PC-9 (cell line): ENCODE measurements at regions of chr1 and their contacts with region 1.

Region 1: DNA sequence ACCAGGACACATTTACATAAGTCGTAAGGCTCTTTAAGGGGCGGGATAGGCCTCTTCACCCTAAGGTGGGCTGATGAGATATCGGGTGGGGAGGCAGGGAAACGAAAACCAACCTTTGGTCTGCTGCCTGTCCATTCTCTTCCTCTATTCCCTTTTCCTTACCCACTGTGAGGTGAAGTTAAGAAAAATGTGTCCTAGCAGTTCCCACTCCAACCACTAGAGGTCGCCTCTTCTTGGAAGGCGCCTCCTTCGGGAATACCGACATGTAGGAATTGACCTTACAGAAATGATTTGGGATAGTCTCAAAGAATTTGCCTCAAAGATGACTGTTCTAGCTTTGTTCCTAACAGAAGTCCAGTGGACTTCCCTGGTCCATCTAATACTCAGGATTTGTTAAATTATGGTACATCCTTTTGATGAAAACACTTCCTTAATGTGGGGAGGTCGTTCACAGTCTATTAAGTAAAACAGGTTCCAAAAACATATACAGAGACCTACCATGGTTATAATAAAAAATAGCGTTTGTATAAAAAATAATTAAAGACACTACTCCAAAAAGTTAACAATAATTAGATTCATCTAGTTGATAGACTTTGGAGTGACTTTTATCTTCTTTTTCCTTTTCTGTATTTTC is 14.1 kb downstream of the AZIN2 start:
- DNase-seq: peak; percentile 47 to 58
- H3K4me3 ChIP-seq: no peak overlapping the region
- H3K27ac ChIP-seq: no peak overlapping the region
- H3K4me1 ChIP-seq: peaks cover 19% of the 10 kb centered on the region
- H3K27me3 ChIP-seq: no peaks in the 10 kb centered on the region
- CTCF ChIP-seq: peak; percentile 98

Region 2: DNA sequence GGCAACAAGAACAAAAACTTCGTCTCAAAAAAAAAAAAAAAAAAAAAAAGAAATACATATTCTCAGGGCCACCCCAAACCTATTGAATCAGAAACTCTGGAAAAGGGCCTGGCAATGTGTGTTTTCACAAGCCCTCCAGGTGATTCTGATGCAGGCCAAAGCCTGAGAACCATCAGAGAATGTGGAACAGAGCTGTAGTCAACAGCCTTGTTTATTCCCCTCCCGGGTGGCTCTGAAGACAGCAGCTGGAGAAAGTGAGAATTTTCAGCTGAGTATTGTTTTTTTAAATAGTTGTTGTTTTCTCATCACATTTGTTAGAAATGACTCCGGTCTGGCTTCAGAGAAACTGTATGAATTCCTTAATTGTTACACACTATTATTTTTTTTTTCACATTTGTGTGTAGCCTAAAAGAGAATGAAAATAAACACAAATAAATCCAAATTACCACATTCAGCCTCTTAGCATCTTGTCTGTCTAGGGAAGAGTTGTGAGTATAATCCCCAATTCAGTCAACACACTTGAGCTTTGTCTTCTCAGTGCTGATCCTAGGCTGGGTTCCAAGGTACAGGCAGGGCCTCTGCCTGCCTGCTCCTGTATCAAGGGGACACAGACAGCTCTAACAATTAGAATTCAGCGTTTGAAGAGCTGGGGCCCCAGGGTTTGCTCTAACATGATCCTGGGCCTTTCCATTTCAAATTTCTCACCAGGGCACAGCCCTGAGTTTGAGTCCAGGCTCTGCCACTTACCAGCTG is 20.7 kb before region 1 on chr1:
- CTCF ChIA-PET with region 1: no interaction called
- POLR2A ChIA-PET with region 1: interaction called, 10 read pairs
- intact Hi-C with region 1: no loop called
- DNase-seq: no peak
- H3K4me3 ChIP-seq: no peak overlapping the region
- H3K27ac ChIP-seq: no peak overlapping the region
- H3K4me1 ChIP-seq: no peaks in the 10 kb centered on the region
- H3K27me3 ChIP-seq: no peaks in the 10 kb centered on the region
- CTCF ChIP-seq: no peak

Region 3: DNA sequence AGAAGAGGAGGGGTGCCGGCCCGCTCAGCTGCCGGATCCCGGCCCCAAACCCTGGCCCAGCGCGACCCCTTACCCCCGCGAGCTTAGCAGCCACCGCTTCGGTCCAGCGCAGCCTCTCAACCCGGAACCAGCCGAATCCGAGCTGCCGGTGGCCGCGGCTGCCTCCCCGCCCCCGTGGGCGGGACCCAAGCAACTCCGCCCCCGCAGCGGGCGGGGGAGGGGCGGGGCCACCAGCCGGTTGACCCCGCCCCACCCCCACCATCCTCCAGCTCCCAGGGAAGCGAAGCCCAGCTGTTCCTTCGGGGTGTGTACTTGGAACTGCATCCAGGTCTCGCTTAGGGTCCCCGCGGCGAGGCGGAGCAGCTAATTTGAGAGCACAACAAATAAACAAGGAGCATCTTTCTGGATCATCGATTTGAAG is 86.8 kb after region 1 on chr1 and contains the start of gene TRIM62:
- CTCF ChIA-PET with region 1: no interaction called
- POLR2A ChIA-PET with region 1: interaction called, 13 read pairs
- intact Hi-C with region 1: no loop called
- DNase-seq: peak; percentile 54 to 77
- H3K4me3 ChIP-seq: peak within 1 kb of the TSS; percentile 87
- H3K27ac ChIP-seq: no peak within 1 kb of the TSS
- H3K4me1 ChIP-seq: peaks cover 4% of the 10 kb centered on the region; the same call in 1 of the 2 replicates
- H3K27me3 ChIP-seq: no peaks in the 10 kb centered on the region
- CTCF ChIP-seq: no peak
- total RNA-seq, gene TRIM62: 9.9 and 14.3 TPM in 2 replicates

Region 4: GRCh38 chr1:33455539-33456501 is 360.7 kb after region 1 on chr1:
- CTCF ChIA-PET with region 1: interaction called, 4 read pairs
- POLR2A ChIA-PET with region 1: no interaction called
- intact Hi-C with region 1: loop called (anchors 5 kb)
- DNase-seq: peak; percentile 50 to 51
- H3K4me3 ChIP-seq: no peak overlapping the region
- H3K27ac ChIP-seq: no peak overlapping the region
- H3K4me1 ChIP-seq: peaks cover 32% of the 10 kb centered on the region
- H3K27me3 ChIP-seq: no peaks in the 10 kb centered on the region
- CTCF ChIP-seq: peak; percentile 76

Region 5: GRCh38 chr1:33610864-33611455 is 515.9 kb after region 1 on chr1:
- CTCF ChIA-PET with region 1: interaction called, 4 read pairs
- POLR2A ChIA-PET with region 1: no interaction called
- intact Hi-C with region 1: loop called (anchors 5 kb)
- DNase-seq: no peak
- H3K4me3 ChIP-seq: no peak overlapping the region
- H3K27ac ChIP-seq: no peak overlapping the region
- H3K4me1 ChIP-seq: no peaks in the 10 kb centered on the region
- H3K27me3 ChIP-seq: peaks cover 82% of the 10 kb centered on the region
- CTCF ChIP-seq: no peak